H1 (cell line): ENCODE measurements at regions of chr2 and their contacts with region 1.

Region 1: GRCh38 chr2:207896525-207897295 is 127.0 kb upstream of the FZD5 start:
- DNase-seq: peak in 1 of 2 experiments; percentile 36
- H3K4me3 ChIP-seq: peak overlapping the region in 1 of 4 experiments; percentile 24; a peak in 1 of 8 replicates
- H3K27ac ChIP-seq: 0 out of 2 replicates have a peak overlapping the region, but pooled peaks have one; percentile 57
- H3K4me1 ChIP-seq: peaks cover 12 to 37% (median 30%) of the 10 kb centered on the region in 4 experiments
- H3K27me3 ChIP-seq: no peaks in the 10 kb centered on the region
- CTCF ChIP-seq: peak; percentile 46 to 61 (median 49)
- EP300 ChIP-seq: no peak
- POLR2A ChIP-seq: no peak
- RAD21 ChIP-seq: peak; percentile 31 to 50; a peak in 3 of 4 replicates

Region 2: GRCh38 chr2:207769597-207770486 is 126.9 kb before region 1 on chr2 and contains the start of gene FZD5:
- CTCF ChIA-PET with region 1: interaction called, 19 read pairs
- POLR2A ChIA-PET with region 1: interaction called, 8 read pairs
- DNase-seq: peak; percentile 94 to 99
- H3K4me3 ChIP-seq: peak within 1 kb of the TSS; percentile 84 to 96 (median 86)
- H3K27ac ChIP-seq: peak within 1 kb of the TSS; percentile 24; the same call in 1 of the 2 replicates
- H3K4me1 ChIP-seq: peaks cover 0 to 32% (median 26%) of the 10 kb centered on the region in 4 experiments; a peak in 6 of 7 replicates
- H3K27me3 ChIP-seq: peaks cover 0 to 4% (median 1%) of the 10 kb centered on the region in 4 experiments; a peak in 1 of 7 replicates
- CTCF ChIP-seq: peak; percentile 17 to 27 (median 25); a peak in 3 of 4 replicates
- EP300 ChIP-seq: no peak
- POLR2A ChIP-seq: peak; percentile 73 to 89
- RAD21 ChIP-seq: peak; percentile 28 to 48; a peak in 3 of 4 replicates
- total RNA-seq, gene FZD5: 55.2 and 56.6 TPM in 2 replicates

Region 3: DNA sequence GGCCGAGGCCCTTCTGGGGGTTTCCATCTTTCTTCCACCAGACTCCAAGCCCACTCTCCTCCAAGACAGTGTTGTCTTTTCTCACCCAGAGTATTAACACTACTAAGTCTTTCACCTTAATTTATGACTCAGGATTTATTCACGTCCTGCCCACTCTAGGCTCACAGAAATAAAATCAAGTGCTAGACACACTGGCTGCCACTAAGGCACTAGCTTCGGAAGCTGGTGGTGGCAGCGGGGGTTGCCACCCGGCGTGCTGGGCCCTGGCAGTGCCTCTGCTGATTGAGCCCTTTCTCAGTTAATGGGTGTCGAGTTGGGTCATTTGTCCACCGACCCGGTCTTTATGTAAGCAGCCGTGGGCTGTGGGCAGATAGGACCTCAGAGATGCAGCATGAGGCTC is 33.4 kb before region 1 on chr2:
- CTCF ChIA-PET with region 1: interaction called, 12 read pairs
- POLR2A ChIA-PET with region 1: no interaction called
- DNase-seq: no peak
- H3K4me3 ChIP-seq: no peak overlapping the region
- H3K27ac ChIP-seq: no peak overlapping the region
- H3K4me1 ChIP-seq: no peaks in the 10 kb centered on the region
- H3K27me3 ChIP-seq: no peaks in the 10 kb centered on the region
- CTCF ChIP-seq: no peak
- EP300 ChIP-seq: no peak
- POLR2A ChIP-seq: no peak
- RAD21 ChIP-seq: no peak

Region 4: GRCh38 chr2:207879536-207879935 is 17.2 kb before region 1 on chr2:
- CTCF ChIA-PET with region 1: interaction called, 14 read pairs
- POLR2A ChIA-PET with region 1: interaction called, 3 read pairs
- DNase-seq: no peak
- H3K4me3 ChIP-seq: no peak overlapping the region
- H3K27ac ChIP-seq: no peak overlapping the region
- H3K4me1 ChIP-seq: no peaks in the 10 kb centered on the region; a peak in 1 of 7 replicates
- H3K27me3 ChIP-seq: no peaks in the 10 kb centered on the region
- CTCF ChIP-seq: no peak
- EP300 ChIP-seq: no peak
- POLR2A ChIP-seq: no peak
- RAD21 ChIP-seq: no peak

Region 5: DNA sequence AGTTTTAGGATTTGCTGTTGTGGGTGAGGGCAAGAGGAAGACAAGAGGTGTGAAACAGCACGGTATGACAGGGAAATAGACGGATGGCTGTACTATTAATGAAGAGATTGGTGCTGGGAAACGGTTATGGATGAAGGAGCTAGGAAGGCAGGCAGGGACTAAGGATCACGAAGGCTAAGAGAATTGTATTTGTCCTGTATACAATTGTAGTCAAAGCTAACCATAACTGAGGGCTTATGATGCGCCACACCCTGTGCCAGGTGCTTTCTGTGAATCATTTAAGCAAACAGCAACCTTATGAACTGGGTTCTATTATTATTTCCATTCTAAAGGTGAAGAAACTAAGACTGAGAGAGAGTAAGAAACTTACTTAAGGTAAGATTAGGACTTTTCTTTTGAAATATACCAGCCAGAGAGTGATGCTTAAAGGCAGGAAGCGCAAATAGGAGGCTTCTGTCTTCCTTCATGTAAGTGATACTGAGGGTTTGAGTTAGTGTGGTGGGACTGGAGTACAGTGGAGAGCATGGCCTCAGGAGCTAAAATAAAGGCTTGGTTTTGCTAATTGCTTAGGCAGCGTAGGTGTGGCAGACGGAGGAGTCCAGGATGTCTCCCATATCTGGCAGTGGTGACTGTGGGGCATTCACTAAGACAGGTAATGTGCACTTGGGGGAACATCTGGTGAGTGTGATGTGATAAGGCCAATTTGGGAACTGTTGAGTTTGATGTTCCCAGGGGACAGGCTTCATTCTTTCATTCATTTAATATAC is 42.8 kb after region 1 on chr2:
- CTCF ChIA-PET with region 1: interaction called, 15 read pairs
- POLR2A ChIA-PET with region 1: no interaction called
- DNase-seq: no peak
- H3K4me3 ChIP-seq: no peak overlapping the region
- H3K27ac ChIP-seq: no peak overlapping the region
- H3K4me1 ChIP-seq: peaks cover 0 to 6% (median 2%) of the 10 kb centered on the region in 4 experiments; a peak in 3 of 7 replicates
- H3K27me3 ChIP-seq: no peaks in the 10 kb centered on the region
- CTCF ChIP-seq: no peak
- EP300 ChIP-seq: no peak
- POLR2A ChIP-seq: no peak
- RAD21 ChIP-seq: no peak

Region 6: GRCh38 chr2:208311954-208312353 is 415.2 kb after region 1 on chr2:
- CTCF ChIA-PET with region 1: no interaction called
- POLR2A ChIA-PET with region 1: no interaction called
- DNase-seq: no peak
- H3K4me3 ChIP-seq: no peak overlapping the region
- H3K27ac ChIP-seq: no peak overlapping the region
- H3K4me1 ChIP-seq: no peaks in the 10 kb centered on the region
- H3K27me3 ChIP-seq: no peaks in the 10 kb centered on the region
- CTCF ChIP-seq: no peak
- EP300 ChIP-seq: no peak
- POLR2A ChIP-seq: no peak
- RAD21 ChIP-seq: no peak